ENCODE measurements at regions of chr12 and their contacts with region 1.

Region 1: GRCh38 chr12:104108755-104109445 is 29.1 kb downstream of the NFYB start:
- DNase-seq: peak; percentile 74
- H3K4me3 Mint-ChIP-seq: no peak overlapping the region
- H3K27ac Mint-ChIP-seq: no peak overlapping the region
- H3K4me1 Mint-ChIP-seq: peaks cover 9% of the 10 kb centered on the region
- H3K27me3 Mint-ChIP-seq: no peaks in the 10 kb centered on the region

Region 2: GRCh38 chr12:103877934-103878510 is 230.9 kb before region 1 on chr12:
- intact Hi-C with region 1: loop called (anchors 1 kb)
- DNase-seq: peak; percentile 31
- H3K4me3 Mint-ChIP-seq: no peak overlapping the region
- H3K27ac Mint-ChIP-seq: no peak overlapping the region
- H3K4me1 Mint-ChIP-seq: peaks cover 30% of the 10 kb centered on the region
- H3K27me3 Mint-ChIP-seq: peaks cover 15% of the 10 kb centered on the region

Region 3: DNA sequence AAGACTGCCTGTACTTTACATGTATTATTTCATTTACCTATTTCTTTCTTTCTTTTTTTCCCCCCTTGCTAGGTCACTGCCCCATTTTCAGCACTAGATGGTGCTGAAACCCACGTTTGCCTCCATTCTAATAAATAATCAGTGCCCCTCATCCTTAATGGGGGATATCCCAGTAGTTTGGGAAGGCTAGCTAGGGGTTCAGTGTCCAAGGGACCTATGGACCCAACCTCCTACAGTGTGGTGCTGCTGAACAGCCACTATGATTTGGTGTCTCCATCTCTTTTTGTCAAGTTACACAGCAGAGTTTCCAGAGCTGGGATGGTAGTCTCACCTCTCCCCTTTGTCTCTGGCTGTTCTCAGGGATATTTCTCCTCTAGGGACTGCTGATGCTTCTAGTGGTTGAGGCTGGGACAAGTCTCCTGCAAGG is 51.1 kb before region 1 on chr12:
- intact Hi-C with region 1: loop called (anchors 1 kb)
- DNase-seq: no peak
- H3K4me3 Mint-ChIP-seq: no peak overlapping the region
- H3K27ac Mint-ChIP-seq: no peak overlapping the region
- H3K4me1 Mint-ChIP-seq: peaks cover 5% of the 10 kb centered on the region
- H3K27me3 Mint-ChIP-seq: peaks cover 57% of the 10 kb centered on the region

Region 4: DNA sequence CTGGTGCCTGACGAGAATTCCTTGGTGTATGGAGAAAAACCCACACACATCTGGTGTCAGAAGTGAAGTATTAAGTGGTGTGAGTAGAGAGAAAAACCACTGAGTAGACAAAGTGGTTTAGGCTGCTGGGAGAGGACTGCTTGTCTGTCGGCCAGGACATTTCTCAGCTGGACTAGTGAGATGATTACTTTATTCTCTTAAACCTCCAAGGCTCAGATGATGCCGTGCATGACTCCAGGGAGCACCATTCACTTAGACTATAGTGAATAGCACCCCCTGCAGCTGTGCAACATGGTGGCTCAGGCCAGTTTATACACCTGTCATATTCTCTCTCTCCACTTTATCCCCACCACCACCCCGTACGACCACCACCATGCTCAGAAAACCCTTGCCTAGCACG is 57.6 kb after region 1 on chr12:
- intact Hi-C with region 1: no loop called
- DNase-seq: no peak
- H3K4me3 Mint-ChIP-seq: no peak overlapping the region
- H3K27ac Mint-ChIP-seq: no peak overlapping the region
- H3K4me1 Mint-ChIP-seq: no peaks in the 10 kb centered on the region
- H3K27me3 Mint-ChIP-seq: peaks cover 8% of the 10 kb centered on the region

Measured in activated T-helper 2 cell treated with anti-CD3 and anti-CD28 coated beads, Interferon-gamma antibody, Interleukin-2, Interleukin-4, amounts not matched to agents 10 μg/mL and 5 μg/mL and 100 μg/mL, durations not matched to agents 14 hours and 24 hours and 36 hours (primary cell).